Gastrocnemius medialis (tissue), 4 donors: ENCODE measurements at regions of chr12 and their contacts with region 1.

Region 1: DNA sequence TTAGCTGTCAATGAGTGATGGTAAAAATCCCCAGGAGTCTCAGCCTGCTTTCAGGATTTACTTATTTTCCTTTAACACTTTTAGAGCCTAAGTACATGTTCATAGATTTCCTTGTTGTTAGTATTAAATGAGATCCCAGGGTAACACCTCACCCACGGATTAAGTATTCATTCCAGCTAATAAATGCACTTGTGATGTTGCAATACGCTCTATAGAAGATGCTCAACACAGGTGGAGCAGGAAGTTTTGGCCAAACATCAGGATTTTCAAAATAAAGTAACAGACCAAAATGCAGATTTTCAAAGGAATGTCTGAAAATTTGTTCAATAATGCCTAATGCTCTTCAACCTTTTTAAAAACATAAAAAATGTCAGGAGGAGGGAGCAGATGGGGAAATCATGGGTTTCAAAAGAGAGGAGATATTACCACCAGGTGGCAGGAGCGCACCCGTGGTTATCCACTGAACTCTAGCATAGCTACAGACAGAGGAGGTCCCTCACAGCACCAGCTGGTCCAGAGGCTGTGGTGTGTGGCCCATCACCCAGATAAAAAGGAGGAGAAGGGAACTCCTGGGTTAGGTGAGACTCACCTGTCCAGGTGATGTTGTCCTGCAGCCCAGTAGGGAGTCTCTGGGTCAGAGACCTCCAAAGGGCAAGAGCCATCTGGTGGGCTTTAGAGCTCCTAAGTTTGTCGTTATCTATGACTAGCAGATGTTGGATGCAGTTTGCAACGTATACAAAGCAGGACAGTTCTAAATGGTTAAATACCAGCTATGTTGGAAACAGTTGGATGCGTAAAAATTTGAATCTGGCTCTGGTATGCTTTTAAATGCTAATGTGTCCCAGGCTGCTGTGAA is 1158.4 kb upstream of the TMEM132C start:
- DNase-seq: peak in 1 of 2 donors; percentile 18
- ATAC-seq: no peak
- H3K4me3 ChIP-seq: no peak overlapping the region
- H3K27ac ChIP-seq: no peak overlapping the region
- H3K4me1 ChIP-seq: no peaks in the 10 kb centered on the region
- H3K27me3 ChIP-seq: no peaks in the 10 kb centered on the region
- CTCF ChIP-seq: peak; percentile 3 to 57 (median 44)
- POLR2A ChIP-seq: no peak

Region 2: DNA sequence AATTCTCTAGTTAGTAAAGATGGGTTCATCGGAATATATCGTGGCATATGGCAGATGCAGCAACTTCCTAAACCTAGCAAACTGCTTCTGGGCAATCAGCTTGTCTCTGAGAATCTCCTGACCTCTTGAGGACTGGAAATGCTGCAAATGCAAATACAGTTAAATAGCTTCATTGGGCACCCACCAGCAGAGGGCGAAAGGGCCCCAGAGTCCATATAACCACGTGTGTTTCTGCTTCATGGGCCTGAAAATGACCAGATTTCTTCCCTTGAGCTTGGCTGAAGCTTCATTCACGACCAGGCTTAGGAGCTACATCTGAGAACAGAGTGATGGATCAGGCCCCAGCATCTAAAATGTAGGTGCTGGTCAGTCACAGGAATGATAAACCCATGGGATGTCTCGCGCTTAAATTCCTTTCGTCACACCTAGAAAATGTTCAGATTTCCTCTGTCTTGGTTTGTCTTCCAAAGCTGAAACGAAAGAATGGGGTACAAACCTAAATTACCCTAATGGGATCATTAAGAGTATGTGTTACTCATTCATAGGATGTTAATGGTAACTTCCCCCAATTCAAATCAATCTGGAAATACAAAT is 324.2 kb before region 1 on chr12:
- in situ Hi-C with region 1: no loop called
- intact Hi-C with region 1: no loop called
- DNase-seq: no peak
- ATAC-seq: no peak
- H3K4me3 ChIP-seq: no peak overlapping the region
- H3K27ac ChIP-seq: no peak overlapping the region
- H3K4me1 ChIP-seq: no peaks in the 10 kb centered on the region
- H3K27me3 ChIP-seq: no peaks in the 10 kb centered on the region
- CTCF ChIP-seq: no peak
- POLR2A ChIP-seq: no peak

Region 3: GRCh38 chr12:127293507-127294310 is 185.1 kb after region 1 on chr12:
- in situ Hi-C with region 1: loop called in 3 of 4 experiments (anchors 10 to 25 kb)
- intact Hi-C with region 1: loop called (anchors 5 kb)
- DNase-seq: peak in 1 of 2 donors; percentile 25
- ATAC-seq: no peak
- H3K4me3 ChIP-seq: no peak overlapping the region
- H3K27ac ChIP-seq: no peak overlapping the region
- H3K4me1 ChIP-seq: no peaks in the 10 kb centered on the region
- H3K27me3 ChIP-seq: no peaks in the 10 kb centered on the region
- CTCF ChIP-seq: peak; percentile 19 to 58 (median 42)
- POLR2A ChIP-seq: no peak

Region 4: DNA sequence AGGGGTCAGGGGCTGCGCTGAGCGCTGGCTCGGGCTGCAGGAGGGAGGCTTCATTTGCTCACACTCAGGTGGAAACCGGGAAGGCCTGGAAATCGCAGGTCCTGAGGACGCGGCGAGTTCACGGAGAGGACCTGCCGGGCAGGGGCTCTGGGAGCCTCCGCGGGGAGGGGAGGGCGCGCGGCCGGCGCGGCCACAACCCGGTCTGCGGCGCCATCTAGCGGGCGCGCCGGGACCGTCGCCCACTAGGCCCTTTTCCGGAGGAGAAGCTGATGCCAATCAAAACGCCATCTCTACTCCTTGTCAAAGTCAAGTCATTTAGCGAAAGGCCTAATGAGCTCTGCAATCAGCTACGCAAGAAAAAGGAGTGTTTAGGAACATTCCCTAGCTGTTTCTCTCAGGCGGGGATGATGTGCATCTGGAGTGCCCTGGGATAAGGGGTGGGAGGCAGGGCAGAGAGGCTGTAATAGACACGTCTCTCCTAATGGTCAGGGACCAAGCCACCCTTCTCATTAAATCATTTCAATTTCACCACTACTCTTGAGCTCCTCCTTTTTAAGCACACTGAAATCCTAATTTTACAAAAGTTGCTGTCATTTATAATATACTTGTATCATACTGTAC is 272.6 kb after region 1 on chr12:
- in situ Hi-C with region 1: loop called in 1 of 4 experiments (anchors 25 kb)
- intact Hi-C with region 1: loop called (anchors 1 kb)
- DNase-seq: no peak
- ATAC-seq: no peak
- H3K4me3 ChIP-seq: no peak overlapping the region
- H3K27ac ChIP-seq: no peak overlapping the region
- H3K4me1 ChIP-seq: no peaks in the 10 kb centered on the region
- H3K27me3 ChIP-seq: no peaks in the 10 kb centered on the region
- CTCF ChIP-seq: peak in 4 of 5 experiments; percentile 39 to 60 (median 46)
- POLR2A ChIP-seq: no peak